Caco-2 (cell line): ENCODE measurements at regions of chr4 and their contacts with region 1.

Region 1: DNA sequence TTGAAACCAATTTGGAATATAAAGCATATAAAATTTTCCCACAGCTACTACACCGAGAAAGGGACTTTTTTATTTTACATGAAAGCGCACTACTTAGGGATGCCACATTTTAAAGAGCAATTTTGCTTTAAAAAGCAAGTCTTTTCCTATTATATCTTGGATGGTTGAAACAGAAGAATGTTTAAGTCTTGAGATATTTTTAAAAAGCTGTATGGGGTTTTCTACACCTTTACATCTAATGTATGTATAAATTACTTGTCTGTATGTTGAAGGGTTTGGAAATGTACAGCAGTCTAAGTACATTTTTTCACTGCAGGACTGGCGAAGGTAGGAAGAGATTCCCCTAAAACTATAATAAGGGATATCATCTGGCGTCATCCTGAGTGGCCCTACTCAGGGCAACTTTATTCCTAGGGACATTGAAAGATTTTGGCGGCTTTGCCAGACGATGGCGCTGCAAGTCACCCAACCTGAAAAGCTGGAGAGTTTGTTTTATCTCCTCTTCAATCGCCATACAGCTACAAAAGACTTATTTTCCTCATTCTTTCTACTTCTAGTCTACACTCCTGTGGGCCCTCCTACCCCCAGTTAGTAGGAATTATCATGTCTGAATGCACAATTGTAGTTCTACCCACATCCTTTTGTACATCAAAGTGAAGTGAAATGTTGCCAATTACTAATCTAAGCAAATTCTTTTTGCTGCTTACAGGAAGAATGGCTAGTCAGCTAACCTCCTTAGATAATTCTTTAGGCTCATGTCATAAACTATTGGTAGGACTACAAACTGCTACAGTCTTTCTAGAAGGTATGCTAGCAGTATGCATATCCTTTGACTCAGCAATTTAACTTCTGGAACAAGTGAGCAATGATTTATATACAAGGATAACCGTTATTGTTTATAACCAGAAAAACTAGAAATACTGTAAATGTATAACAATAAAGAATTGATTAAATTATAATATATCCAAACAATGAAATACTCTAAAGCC is 782 bp upstream of the NEK1 start:
- DNase-seq: peak; percentile 71 to 78
- H3K4me3 ChIP-seq: peak overlapping the region; percentile 73
- H3K4me3 Mint-ChIP-seq: peak overlapping the region; percentile 96
- H3K27ac Mint-ChIP-seq: peak overlapping the region; percentile 94
- H3K4me1 ChIP-seq: peaks cover 10% of the 10 kb centered on the region
- H3K4me1 Mint-ChIP-seq: no peaks in the 10 kb centered on the region
- H3K27me3 ChIP-seq: no peaks in the 10 kb centered on the region
- H3K27me3 Mint-ChIP-seq: no peaks in the 10 kb centered on the region
- CTCF ChIP-seq: peak; percentile 60 to 64

Region 2: DNA sequence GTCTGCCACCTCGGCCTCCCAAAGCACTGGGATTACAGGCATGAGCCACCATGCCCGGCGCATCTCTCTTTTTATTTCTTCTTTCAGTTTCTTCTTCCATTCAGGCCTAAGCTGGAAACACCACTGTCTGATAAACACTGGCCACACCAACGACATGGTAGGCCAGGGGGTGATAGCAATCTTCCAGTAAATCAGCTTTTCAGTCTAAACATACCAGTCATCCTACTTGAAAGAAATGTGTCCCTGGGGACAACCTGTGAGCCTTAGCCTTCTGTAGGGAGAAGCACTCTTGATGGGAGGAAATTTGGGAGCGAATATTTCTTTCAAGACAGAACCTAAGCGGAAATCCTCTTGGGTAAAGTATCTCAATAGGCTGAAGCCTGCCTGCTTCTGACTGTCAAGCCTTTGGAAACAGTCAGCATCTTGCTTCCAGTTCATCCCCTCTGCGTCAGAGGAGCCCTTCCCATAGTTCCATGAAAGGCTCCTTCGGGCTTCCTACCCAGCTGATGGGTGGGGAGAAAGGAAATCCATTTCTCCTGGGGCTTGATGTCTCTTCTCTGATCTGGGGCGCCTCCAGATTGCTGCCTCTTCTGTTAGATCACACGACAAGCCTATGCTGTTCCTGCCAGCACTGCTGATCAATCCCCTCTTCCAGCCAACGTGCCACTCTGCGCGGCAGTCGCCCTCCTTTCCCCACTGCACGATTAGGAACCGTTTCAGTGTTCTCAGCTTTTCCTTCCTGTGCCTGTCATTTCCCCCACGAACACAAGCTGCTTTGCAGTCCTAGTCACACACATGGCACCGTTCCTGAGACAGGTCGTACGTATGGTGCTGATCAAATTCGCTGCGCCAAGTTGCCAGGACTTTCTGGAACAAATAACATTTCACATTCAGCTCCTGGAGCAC is 553.6 kb before region 1 on chr4:
- CTCF ChIA-PET with region 1: no interaction called
- POLR2A ChIA-PET with region 1: no interaction called
- intact Hi-C with region 1: no loop called
- DNase-seq: no peak
- H3K4me3 ChIP-seq: no peak overlapping the region
- H3K4me3 Mint-ChIP-seq: no peak overlapping the region
- H3K27ac Mint-ChIP-seq: no peak overlapping the region
- H3K4me1 ChIP-seq: no peaks in the 10 kb centered on the region
- H3K4me1 Mint-ChIP-seq: peaks cover 1% of the 10 kb centered on the region
- H3K27me3 ChIP-seq: no peaks in the 10 kb centered on the region
- H3K27me3 Mint-ChIP-seq: no peaks in the 10 kb centered on the region
- CTCF ChIP-seq: no peak

Region 3: DNA sequence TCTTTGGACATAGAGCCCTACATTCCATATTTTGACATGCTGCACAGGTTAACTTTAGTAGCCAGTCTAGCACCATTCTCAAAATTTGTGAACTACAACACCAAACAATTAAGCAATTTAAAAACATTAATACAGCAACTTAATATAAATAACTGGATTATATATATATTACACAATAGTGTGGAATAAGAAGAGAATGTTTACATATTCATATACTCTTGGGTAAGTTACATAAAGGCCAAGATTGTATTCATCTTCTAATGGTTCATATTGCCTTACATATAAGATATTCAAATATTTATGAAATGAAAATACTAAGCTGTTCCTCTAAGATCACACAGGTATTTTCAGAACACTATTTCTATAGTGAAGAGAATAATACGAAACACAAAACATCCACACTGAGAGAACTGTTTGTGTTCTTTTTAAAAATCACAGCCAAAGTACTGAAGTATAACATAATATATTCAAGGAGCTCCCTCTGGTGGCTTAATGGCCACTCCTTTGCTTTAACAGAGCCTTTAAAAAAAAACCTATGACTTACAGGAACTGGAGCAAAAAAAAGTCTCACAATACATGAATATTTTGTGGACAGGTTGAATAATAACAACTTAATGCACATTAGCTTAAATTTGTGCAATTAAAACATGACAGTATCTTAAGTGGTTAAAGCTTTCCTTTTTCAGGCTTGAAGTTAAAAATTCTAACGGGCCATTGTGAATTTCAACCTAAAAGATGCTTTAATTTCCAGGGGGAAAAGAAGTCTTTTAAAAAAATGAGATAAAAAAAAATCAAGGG is 46.9 kb before region 1 on chr4:
- CTCF ChIA-PET with region 1: no interaction called
- POLR2A ChIA-PET with region 1: no interaction called
- intact Hi-C with region 1: no loop called
- DNase-seq: peak in 1 of 2 experiments; percentile 52
- H3K4me3 ChIP-seq: no peak overlapping the region
- H3K4me3 Mint-ChIP-seq: no peak overlapping the region
- H3K27ac Mint-ChIP-seq: no peak overlapping the region
- H3K4me1 ChIP-seq: no peaks in the 10 kb centered on the region
- H3K4me1 Mint-ChIP-seq: no peaks in the 10 kb centered on the region
- H3K27me3 ChIP-seq: no peaks in the 10 kb centered on the region
- H3K27me3 Mint-ChIP-seq: no peaks in the 10 kb centered on the region
- CTCF ChIP-seq: peak; percentile 56 to 63

Region 4: DNA sequence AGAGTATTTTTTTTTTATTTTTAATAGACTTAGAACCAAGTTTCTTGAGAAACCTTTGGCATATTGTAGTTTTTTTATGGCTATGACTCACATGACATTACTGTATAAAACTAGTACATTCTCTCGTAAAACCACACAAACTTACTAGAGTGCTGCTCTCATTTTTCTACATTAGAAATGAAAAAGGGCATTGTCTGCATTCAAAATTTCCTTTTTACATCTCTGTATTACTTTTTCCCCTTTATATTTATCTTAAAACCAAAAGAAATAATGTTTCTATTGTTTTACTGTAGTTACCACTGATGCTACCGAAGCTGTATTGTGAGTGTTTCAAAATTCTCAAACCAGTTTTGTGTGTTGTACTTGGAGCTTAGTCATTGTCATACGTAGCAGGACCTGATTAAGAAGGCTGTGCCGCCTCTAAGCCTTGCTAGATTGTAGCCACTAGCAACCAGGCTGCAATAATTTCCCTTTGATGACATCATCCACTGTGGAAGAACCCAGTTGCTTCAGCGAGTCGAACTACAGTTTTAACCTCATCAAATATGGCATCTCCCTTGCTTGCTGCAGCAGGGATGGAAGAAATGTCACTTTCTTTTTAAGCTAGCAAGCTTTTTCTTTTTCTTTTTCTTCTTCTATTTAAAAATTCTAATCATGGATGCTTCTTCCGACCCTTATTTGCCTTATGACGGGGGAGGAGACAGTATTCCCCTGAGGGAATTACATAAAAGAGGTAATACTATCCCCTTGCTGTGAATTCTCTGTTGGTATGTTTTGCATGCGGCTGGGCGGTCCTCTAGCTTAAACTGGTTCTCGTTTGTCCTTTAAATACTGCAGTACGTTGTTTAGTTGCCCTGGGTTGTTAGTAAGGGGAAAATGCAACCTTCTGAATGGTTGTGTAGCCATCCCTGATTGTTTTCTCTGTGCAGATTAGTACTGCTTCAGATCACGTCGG is 46.8 kb after region 1 on chr4:
- CTCF ChIA-PET with region 1: interaction called, 3 read pairs
- POLR2A ChIA-PET with region 1: interaction called, 4 read pairs
- intact Hi-C with region 1: loop called (anchors 2 kb)
- DNase-seq: peak; percentile 90
- H3K4me3 ChIP-seq: peak overlapping the region; percentile 42
- H3K4me3 Mint-ChIP-seq: peak overlapping the region; percentile 84
- H3K27ac Mint-ChIP-seq: peak overlapping the region; percentile 98
- H3K4me1 ChIP-seq: peaks cover 25% of the 10 kb centered on the region
- H3K4me1 Mint-ChIP-seq: peaks cover 7% of the 10 kb centered on the region
- H3K27me3 ChIP-seq: no peaks in the 10 kb centered on the region
- H3K27me3 Mint-ChIP-seq: no peaks in the 10 kb centered on the region
- CTCF ChIP-seq: no peak

Region 5: GRCh38 chr4:169757575-169758184 is 144.5 kb after region 1 on chr4 and contains the start of gene HPF1:
- CTCF ChIA-PET with region 1: interaction called, 4 read pairs
- POLR2A ChIA-PET with region 1: no interaction called
- intact Hi-C with region 1: loop called (anchors 1 kb)
- DNase-seq: peak; percentile 92
- H3K4me3 ChIP-seq: peak within 1 kb of the TSS; percentile 81
- H3K4me3 Mint-ChIP-seq: peak within 1 kb of the TSS; percentile 77
- H3K27ac Mint-ChIP-seq: peak within 1 kb of the TSS; percentile 5
- H3K4me1 ChIP-seq: 0 out of 2 replicates have a peak, but pooled peaks cover 5% of the 10 kb centered on the region
- H3K4me1 Mint-ChIP-seq: peaks cover 12% of the 10 kb centered on the region
- H3K27me3 ChIP-seq: no peaks in the 10 kb centered on the region
- H3K27me3 Mint-ChIP-seq: no peaks in the 10 kb centered on the region
- CTCF ChIP-seq: no peak
- total RNA-seq, gene HPF1: 9.7 and 14.9 TPM in 2 replicates

Region 6: DNA sequence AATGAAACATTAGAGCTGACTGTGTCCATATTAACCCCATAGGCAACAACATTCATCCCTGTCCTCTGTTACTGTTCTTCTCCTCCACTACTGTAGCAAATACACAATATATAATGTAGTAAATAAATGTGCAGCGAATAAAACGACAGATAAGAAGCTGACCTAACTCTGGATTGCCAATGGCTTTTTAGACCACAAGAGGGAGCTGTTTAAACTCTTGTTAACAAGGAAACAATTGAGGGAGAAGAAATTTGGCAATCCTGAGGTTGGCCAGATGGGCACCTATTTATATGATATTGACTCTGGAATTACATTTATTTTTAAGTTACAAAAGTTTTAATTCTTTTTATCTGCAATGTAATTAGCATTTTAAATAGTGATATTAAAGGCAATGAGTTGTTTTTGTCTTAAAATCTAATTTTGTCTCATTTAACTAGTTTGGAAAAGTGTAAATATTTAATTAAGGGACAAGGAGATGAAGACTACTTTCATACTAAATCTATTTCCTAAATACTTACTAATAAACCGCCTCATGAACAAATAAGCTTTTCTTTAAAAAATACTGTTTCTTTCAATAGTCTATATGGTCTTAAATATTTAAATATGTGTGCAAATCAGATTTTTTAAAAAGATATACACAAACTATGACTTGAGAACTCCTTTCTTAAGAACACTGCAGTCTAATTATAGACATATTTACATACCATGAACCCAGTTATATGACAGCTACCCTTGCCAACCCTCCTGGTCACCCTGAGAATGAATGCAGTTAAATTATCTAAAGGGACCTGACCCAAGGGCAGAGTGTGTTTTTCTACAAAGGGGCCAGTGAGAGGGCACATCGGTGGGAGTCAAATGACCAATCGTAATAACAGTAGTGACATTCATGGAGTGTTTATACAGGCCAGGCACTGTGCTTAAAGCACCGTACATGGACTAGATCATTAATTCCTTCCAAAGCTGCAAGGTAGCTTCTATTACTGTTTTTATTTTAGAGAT is 197.5 kb after region 1 on chr4:
- CTCF ChIA-PET with region 1: no interaction called
- POLR2A ChIA-PET with region 1: no interaction called
- intact Hi-C with region 1: loop called (anchors 1 kb)
- DNase-seq: peak in 1 of 2 experiments; percentile 59
- H3K4me3 ChIP-seq: no peak overlapping the region
- H3K4me3 Mint-ChIP-seq: no peak overlapping the region
- H3K27ac Mint-ChIP-seq: no peak overlapping the region
- H3K4me1 ChIP-seq: no peaks in the 10 kb centered on the region
- H3K4me1 Mint-ChIP-seq: no peaks in the 10 kb centered on the region
- H3K27me3 ChIP-seq: no peaks in the 10 kb centered on the region
- H3K27me3 Mint-ChIP-seq: peaks cover 3% of the 10 kb centered on the region
- CTCF ChIP-seq: peak; percentile 57 to 70

Region 7: DNA sequence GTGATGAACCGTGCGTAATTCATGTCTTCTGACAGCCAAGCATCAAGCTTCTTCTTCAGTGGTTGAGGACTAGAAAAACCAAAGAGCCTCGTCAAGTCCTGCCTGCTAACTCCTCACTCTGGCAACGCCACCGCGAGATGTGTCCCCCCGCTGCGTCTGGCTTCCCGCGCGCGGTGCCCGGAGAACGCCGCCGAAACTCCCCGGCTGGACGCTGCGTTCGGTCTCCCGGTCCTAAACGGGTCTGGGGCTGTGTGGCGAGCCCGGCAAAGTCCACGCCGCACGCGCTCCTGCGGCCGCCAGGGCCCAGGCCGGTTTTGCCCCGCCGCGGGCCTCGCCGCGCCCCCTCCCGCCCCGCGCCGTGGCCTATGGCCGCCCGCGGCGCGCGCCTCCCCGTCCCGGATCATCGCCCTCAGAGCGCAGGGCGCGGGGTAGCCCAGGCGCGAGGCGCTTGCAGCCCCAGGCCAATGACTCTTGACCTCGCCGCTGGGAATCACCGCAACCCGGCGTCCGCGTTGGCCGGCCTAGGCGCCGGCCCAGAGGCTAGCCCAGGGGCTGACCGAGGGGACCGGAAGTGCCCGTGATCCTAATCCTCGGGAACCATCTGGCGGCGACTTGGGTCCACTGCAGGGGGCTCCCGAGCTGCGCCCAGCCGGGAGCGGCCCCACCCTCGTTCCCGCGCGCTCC is 476.6 kb after region 1 on chr4 and contains the start of gene AADAT:
- CTCF ChIA-PET with region 1: interaction called, 3 read pairs
- POLR2A ChIA-PET with region 1: no interaction called
- intact Hi-C with region 1: loop called (anchors 2 kb)
- DNase-seq: peak; percentile 87 to 90
- H3K4me3 ChIP-seq: peak within 1 kb of the TSS; percentile 63
- H3K4me3 Mint-ChIP-seq: peak within 1 kb of the TSS; percentile 96
- H3K27ac Mint-ChIP-seq: peak within 1 kb of the TSS; percentile 82
- H3K4me1 ChIP-seq: no peaks in the 10 kb centered on the region
- H3K4me1 Mint-ChIP-seq: peaks cover 7% of the 10 kb centered on the region
- H3K27me3 ChIP-seq: no peaks in the 10 kb centered on the region
- H3K27me3 Mint-ChIP-seq: no peaks in the 10 kb centered on the region
- CTCF ChIP-seq: peak; percentile 69 to 83
- total RNA-seq, gene AADAT: 8.4 and 10.5 TPM in 2 replicates